Cardiac septum (tissue), 1 donor: ENCODE measurements at regions of chr19 and their contacts with region 1.

Region 1: DNA sequence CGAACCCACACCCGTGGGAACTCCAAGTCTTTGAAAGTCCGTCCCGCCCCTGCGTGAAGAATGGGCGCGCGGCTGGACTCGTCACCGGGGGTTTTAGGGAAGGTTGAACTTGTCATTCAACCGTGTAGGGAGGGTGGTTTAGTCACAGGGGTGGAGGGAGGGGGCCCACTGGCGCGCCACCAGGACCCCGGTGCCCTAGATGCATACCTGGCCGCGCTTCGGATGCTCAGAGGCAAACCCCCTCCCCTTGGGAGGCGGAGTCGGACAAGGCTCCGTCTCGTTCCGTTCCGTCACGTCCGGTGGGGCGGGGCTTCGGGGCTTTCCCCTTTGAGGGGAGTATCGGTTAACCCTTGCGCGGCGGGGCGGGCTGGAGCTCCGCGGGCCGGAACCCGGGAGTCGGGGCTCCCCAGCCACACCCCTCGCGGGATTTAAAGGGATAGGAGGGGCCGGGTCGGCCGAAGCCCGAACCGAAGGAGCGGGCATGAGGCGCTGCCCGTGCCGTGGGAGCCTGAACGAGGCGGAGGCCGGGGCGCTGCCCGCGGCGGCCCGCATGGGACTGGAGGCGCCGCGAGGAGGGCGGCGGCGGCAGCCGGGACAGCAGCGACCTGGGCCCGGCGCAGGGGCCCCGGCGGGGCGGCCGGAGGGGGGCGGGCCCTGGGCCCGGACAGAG is at the starts of genes COQ8B and ITPKC:
- DNase-seq: peak; percentile 100
- total RNA-seq, gene COQ8B: 18.1 TPM
- total RNA-seq, gene ITPKC: 10.0 TPM

Region 2: GRCh38 chr19:39412100-39412866 is 1304.5 kb before region 1 on chr19 and contains the start of gene PLEKHG2:
- intact Hi-C with region 1: loop called (anchors 10 kb)
- DNase-seq: peak; percentile 97
- total RNA-seq, gene PLEKHG2: 25.1 TPM

Region 3: GRCh38 chr19:40603389-40604135 is 113.2 kb before region 1 on chr19:
- intact Hi-C with region 1: loop called (anchors 5 kb)
- DNase-seq: peak; percentile 97

Region 4: DNA sequence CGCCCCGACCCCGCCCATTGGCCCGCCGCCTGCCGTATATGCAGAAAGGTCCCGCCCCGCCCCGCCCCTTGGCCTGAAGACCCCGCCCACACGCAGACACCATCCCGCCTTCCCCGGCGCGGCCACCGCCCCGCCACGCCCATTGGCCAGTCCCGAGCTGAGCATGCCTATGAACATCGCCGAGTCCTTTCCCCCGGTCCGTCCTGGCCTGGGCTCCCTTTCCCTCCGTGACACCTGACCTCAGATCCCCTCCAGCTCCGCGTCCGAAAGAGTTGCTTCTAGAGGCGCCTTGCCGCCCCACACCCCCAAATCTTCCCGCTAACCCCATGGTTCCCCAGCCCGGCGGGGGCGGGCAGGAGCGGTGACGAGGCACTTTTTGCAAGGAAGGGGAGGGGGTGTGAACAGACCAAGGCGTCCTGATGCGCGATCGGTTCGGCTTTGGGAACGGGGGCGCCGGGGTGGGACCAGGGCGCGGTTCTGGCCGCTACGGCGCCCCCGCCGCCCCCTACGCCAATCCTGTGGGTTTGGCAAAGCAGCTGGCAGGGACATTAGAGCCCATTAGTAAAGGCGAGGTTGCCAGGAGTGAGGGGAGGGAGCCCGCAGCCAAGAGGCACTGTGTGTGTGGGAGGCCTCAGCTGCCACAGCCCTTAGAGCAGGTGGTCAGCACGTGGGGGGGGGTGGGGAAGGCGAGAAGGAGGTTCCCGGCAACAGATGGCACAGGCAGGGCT is 25.9 kb before region 1 on chr19:
- intact Hi-C with region 1: loop called (anchors 1 kb)
- DNase-seq: peak; percentile 97

Region 5: GRCh38 chr19:40798223-40798996 is 81.6 kb after region 1 on chr19:
- intact Hi-C with region 1: loop called (anchors 1 kb)
- DNase-seq: peak; percentile 100

Region 6: DNA sequence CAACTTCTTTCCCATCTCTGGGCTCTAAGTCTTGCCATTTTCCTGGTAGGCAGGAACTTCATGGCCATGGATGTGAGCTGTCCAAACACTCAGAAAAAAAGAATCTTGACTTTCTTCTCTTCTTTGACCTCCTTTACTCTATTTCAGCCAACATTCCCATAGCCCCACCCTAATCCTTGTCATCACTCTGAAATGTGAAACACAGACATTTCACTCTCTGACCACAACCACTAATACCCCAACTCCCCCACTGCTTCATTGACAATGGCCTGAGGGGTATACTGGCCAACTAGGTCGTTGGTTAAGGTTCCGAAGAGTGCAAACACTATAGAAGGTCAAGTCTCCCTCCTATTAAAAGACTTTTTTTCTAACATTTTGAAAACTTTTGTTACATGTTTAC is 366.7 kb after region 1 on chr19:
- intact Hi-C with region 1: no loop called
- DNase-seq: no peak